Dorsolateral prefrontal cortex (tissue), 120 donors: ENCODE measurements at regions of chr17 and their contacts with region 1.

Region 1: DNA sequence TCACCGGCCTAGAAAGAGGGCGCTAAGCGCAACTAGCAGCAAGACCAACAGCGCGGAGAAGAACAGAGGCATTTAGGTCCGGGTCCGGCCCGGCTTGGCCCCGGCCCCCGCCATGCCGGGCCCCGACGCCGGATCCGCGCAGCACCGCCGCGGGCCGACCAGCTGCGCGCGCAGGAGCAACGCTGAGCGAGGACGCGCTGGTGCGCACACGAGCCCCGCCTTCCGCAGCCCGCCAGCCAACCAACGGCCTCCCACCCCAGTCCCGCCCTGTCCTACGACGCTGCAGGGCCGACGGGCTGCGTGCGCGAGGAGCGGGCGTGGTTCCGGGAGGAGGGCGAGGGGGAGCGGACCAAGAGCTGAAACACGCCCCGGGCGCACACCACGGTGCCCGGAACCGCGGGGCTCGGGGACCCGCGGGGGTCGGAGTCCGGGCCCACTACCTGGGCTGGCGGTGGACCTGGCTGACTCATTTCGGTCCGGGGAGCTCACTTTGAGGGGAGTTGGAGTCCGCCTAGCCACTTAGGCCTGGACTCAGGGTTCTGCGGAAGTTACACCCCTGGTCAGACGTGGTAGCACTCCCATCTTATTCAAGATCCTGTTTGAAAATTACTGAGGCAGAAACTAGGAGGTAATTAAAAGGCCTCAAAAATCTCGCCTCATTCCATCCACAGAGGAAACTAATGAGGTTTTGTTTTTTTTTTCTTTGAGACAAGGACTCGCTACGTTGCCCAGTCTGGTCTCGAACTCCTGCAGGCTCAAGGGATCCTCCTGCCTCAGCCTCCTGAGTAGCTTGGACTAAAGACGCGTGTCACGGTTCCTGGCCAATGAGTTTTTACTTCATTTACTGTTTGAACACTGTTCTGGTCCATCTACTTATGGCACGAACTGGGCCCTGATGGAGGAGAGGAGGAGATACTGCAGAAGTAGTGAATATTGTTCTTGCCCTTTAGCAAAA is at the start of gene BLTP2:
- DNase-seq: peak; percentile 89 to 97 (median 94)
- H3K4me3 ChIP-seq: peak within 1 kb of the TSS; percentile 66 to 99 (median 87)
- H3K27ac ChIP-seq: peak within 1 kb of the TSS; percentile 55 to 95 (median 90)
- H3K27me3 ChIP-seq: no peaks in the 10 kb centered on the region
- CTCF ChIP-seq: peak in 38 of 56 donors; percentile 4 to 65 (median 24)
- total RNA-seq, gene BLTP2: 115 to 212 (median 151) TPM

Region 2: GRCh38 chr17:28357061-28357900 is 288.0 kb before region 1 on chr17 and contains the start of gene POLDIP2:
- intact Hi-C with region 1: loop called in 1 of 2 experiments (anchors 10 kb)
- DNase-seq: peak; percentile 92 to 98 (median 94)
- H3K4me3 ChIP-seq: peak within 1 kb of the TSS; percentile 72 to 100 (median 98)
- H3K27ac ChIP-seq: peak within 1 kb of the TSS in 58 of 59 donors; percentile 3 to 94 (median 82)
- H3K27me3 ChIP-seq: no peaks in the 10 kb centered on the region
- CTCF ChIP-seq: peak in 47 of 56 donors; percentile 6 to 64 (median 35)
- total RNA-seq, gene POLDIP2: 49.5 to 88.7 (median 68.8) TPM

Region 3: DNA sequence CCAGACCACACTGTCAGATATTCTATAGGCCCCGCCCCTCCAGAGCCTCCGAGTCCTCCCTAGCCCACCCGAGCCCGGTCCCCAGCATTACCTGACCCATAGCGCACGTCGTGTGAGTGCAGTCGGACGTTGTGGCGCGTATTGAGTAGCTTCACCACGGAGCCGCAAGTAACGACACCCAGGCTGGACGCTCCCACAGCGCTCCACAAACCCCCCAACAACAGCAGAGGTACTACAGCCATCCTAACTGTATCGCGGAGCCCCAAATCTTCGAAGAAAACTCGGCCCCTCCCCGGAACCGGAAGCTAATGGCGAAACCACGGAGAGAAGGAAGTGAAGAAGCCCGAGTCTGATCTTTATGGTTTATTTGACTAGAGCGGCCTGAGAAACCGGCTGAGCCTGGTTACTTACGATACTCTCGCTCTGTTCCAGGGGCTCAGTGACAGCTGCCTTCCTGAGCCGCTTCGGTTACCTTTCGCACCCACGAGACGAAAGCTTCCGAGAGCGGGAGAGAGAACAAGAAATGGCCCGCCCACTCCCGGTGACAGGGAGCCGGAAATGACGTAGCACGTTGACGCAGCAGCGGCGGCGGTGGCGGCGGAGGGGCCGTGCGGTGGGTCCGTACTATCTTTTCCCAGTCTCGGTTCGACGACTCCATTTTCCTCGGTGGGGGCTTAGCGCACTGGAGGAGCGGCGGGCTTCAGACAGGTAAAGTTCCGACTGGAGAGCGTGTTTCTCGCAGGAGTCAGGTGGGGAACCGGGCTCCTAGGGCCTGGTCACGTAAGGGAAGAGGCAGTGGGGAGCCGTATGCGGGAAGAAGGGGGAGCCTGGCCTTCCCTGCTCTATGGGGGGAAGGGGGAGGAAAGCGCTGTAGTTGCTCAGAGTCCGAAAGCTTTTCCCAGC is 16.6 kb after region 1 on chr17 and contains the starts of genes SDF2 and SUPT6H:
- intact Hi-C with region 1: loop called in 1 of 2 experiments (anchors 2 kb)
- DNase-seq: peak; percentile 88 to 96 (median 95)
- H3K4me3 ChIP-seq: peak within 1 kb of the TSS; percentile 61 to 100 (median 92)
- H3K27ac ChIP-seq: peak within 1 kb of the TSS; percentile 78 to 100 (median 97)
- H3K27me3 ChIP-seq: no peaks in the 10 kb centered on the region
- CTCF ChIP-seq: peak in 14 of 56 donors; percentile 5 to 43 (median 18)
- total RNA-seq, gene SDF2: 29.5 to 53.4 (median 38.5) TPM
- total RNA-seq, gene SUPT6H: 72.1 to 118 (median 86.9) TPM

Region 4: GRCh38 chr17:28717578-28718333 is 72.5 kb after region 1 on chr17 and contains the start of gene RAB34:
- intact Hi-C with region 1: loop called (anchors 5 kb)
- DNase-seq: no peak
- H3K4me3 ChIP-seq: peak within 1 kb of the TSS; percentile 28 to 98 (median 59)
- H3K27ac ChIP-seq: peak within 1 kb of the TSS in 55 of 59 donors; percentile 29 to 97 (median 85)
- H3K27me3 ChIP-seq: peaks cover 0 to 24% (median 13%) of the 10 kb centered on the region in 45 donors
- CTCF ChIP-seq: peak in 15 of 56 donors; percentile 11 to 37 (median 22)
- total RNA-seq, gene RAB34: 12.0 to 55.8 (median 25.0) TPM

Region 5: GRCh38 chr17:28916302-28916934 is 271.2 kb after region 1 on chr17:
- intact Hi-C with region 1: loop called in 1 of 2 experiments (anchors 5 kb)
- DNase-seq: peak in 5 of 10 donors; percentile 40 to 65 (median 58)
- H3K4me3 ChIP-seq: no peak overlapping the region
- H3K27ac ChIP-seq: peak overlapping the region in 15 of 59 donors; percentile 2 to 58 (median 38)
- H3K27me3 ChIP-seq: no peaks in the 10 kb centered on the region
- CTCF ChIP-seq: peak; percentile 53 to 84 (median 77)